ENCODE measurements at regions of chr2 and their contacts with region 1.

Region 1: DNA sequence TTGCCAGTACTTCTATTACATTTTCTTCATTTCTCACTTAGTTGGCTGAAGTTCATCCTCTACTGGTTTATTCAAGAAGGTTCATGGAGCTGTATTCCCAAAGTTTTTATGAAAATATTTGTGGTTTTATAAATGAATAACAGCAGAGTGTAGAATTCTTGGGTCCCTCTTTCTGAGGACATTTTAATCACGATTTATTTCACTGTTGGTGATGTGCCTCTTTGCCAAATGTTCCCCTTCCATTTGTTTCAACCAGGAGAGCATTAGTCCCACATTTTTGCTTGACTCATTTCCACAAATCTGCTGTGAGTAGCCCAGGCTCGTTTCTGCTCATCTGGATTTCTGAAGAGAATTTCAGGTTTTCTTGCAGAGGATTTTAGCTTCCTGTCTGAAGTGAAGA is 20.8 kb downstream of the COPS7B start:
- DNase-seq: no peak
- ATAC-seq: no peak
- H3K4me3 ChIP-seq: no peak overlapping the region
- H3K27ac ChIP-seq: no peak overlapping the region
- H3K4me1 ChIP-seq: peaks cover 0 to 6% of the 10 kb centered on the region in 2 experiments; a peak in 1 of 4 replicates
- H3K27me3 ChIP-seq: no peaks in the 10 kb centered on the region
- CTCF ChIP-seq: no peak
- POLR2A ChIP-seq: no peak
- RAD21 ChIP-seq: no peak

Region 2: DNA sequence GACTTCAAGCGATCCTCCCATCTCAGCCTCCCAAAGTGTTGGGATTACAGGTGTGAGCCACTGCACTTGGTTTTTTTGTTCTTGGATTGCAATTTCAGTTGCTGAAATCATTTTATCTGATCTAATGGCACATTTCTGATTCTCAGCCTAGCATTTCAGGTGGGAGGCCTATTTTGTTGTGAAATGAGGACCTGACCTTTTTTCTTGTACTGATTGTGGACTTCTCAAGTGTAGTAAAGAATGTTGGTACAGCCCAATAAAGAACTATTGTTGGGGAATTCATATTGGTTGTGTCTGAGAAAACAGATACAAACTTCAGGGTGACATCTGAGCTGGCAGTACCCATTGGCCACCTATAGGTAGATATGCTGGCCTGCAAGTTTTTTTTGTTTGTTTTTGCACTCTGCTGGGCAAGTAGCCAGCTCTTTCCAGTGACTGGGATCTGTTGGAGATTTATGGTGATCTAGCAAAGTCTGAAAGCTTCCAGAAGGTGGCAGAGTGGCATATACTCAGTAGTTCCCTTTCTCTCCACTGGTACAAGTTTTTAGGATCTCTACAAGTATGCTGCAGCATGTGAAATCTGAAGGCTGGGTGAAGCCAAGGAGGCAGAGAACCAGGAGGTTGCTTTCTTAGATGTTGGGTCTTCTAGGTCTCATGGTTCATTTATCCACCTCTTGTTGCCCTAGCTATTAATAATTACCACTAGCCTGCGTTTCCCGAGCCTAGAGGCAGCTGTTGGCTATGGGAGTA is 11.6 kb before region 1 on chr2:
- CTCF ChIA-PET with region 1: interaction called, 10 read pairs
- POLR2A ChIA-PET with region 1: no interaction called
- RAD21 ChIA-PET with region 1: no interaction called
- intact Hi-C with region 1: no loop called
- DNase-seq: peak; percentile 81
- ATAC-seq: peak; percentile 81
- H3K4me3 ChIP-seq: no peak overlapping the region
- H3K27ac ChIP-seq: peak overlapping the region; percentile 11
- H3K4me1 ChIP-seq: peaks cover 6 to 7% of the 10 kb centered on the region in 2 experiments; a peak in 2 of 4 replicates
- H3K27me3 ChIP-seq: no peaks in the 10 kb centered on the region
- CTCF ChIP-seq: peak; percentile 48 to 70 (median 52); a peak in 5 of 6 replicates
- POLR2A ChIP-seq: no peak
- RAD21 ChIP-seq: no peak